HAP-1 (cell line): ENCODE measurements at regions of chr10 and their contacts with region 1.

Region 1: DNA sequence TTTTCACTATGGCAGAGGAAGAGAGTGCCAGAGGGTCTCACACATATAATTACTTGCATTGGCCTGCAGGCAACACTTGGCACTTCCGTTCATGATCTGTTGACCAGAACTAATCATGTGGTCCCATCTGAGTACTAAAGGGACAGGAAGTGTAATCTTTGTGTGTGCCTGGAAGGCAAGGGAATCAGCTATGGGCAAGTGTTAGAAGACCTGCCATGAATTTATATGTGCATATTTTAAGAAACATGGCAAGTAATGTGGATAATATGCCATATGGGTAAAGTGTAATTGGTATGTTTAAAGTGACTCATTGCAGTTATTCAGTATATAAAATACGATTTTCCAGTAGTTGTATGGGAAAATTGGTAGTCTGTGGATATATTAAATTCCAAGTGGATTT is 46.1 kb downstream of the CCSER2 start:
- DNase-seq: no peak
- H3K4me3 ChIP-seq: no peak overlapping the region
- H3K4me1 ChIP-seq: no peaks in the 10 kb centered on the region
- H3K27me3 ChIP-seq: no peaks in the 10 kb centered on the region

Region 2: DNA sequence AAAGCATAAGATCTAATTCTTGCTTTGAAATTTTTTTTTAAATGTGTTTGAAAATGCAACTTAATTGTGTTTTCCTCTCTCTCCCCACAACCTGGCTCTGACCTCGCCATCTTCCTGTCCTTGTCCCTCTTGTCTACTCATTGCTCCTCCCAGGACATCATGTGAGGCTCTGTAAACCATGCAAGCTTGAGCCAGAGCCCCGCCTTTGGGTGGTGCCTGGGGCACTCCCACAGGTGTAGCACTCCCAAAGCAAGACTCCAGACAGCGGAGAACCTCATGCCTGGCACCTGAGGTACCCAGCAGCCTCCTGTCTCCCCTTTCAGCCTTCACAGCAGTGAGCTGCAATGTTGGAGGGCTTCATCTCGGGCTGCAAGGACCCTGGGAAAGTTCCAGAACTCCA is 189.9 kb before region 1 on chr10:
- in situ Hi-C with region 1: no loop called
- DNase-seq: no peak
- H3K4me3 ChIP-seq: no peak overlapping the region
- H3K4me1 ChIP-seq: peaks cover 3% of the 10 kb centered on the region
- H3K27me3 ChIP-seq: no peaks in the 10 kb centered on the region

Region 3: GRCh38 chr10:84531396-84531795 is 156.9 kb after region 1 on chr10:
- in situ Hi-C with region 1: loop called (anchors 5 kb)
- DNase-seq: no peak
- H3K4me3 ChIP-seq: no peak overlapping the region
- H3K4me1 ChIP-seq: no peaks in the 10 kb centered on the region
- H3K27me3 ChIP-seq: no peaks in the 10 kb centered on the region

Region 4: DNA sequence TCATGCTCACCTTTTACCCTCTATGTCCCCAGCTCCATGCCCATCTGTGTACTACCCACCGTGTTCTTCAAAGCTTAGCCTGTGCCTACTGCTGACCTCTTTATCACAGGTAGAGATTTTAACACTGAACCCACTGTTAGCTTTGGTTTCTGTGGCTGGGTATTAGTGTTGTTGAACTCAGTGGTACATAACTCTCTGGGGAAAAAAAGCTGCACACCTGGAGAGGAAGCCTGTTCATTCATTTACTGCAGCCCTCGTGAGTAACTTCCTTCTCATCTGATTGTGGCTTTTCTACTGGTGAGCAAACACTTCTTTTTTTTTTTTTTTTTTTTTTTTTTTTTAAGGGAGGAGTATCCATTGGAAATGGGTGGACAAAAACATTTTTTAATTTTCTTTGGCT is 280.2 kb after region 1 on chr10:
- in situ Hi-C with region 1: no loop called
- DNase-seq: no peak
- H3K4me3 ChIP-seq: no peak overlapping the region
- H3K4me1 ChIP-seq: no peaks in the 10 kb centered on the region
- H3K27me3 ChIP-seq: 0 out of 2 replicates have a peak, but pooled peaks cover 7% of the 10 kb centered on the region